Heart left ventricle (tissue), 16 donors: ENCODE measurements at regions of chr7 and their contacts with region 1.

Region 1: DNA sequence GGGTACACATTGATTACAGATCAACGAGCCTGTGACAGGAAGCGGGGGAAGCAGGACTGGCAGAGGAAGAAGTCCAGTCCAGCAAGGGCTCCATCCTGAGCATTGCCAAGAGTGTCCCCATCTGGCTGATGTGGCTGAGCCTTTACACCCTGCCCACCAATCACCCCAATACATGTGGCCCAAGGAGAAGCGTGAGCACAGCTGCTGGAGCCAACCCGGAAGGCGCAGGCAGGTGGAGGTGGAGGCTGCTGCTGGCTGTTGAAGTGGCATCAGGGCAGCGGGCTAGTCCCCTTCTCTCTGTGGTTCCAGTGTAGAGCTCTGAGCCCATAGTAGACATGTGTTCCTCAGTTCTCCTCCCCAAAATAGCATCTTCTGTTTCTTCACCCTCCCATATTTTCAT is 6.8 kb upstream of the AMPH start:
- DNase-seq: no peak
- ATAC-seq: no peak
- H3K4me3 ChIP-seq: no peak overlapping the region
- H3K27ac ChIP-seq: no peak overlapping the region
- H3K4me1 ChIP-seq: no peaks in the 10 kb centered on the region
- H3K27me3 ChIP-seq: peaks cover 0 to 5% (median 0%) of the 10 kb centered on the region in 9 donors
- CTCF ChIP-seq: no peak
- POLR2A ChIP-seq: no peak

Region 2: GRCh38 chr7:38262545-38262944 is 375.4 kb before region 1 on chr7:
- intact Hi-C with region 1: no loop called
- DNase-seq: no peak
- ATAC-seq: no peak
- H3K4me3 ChIP-seq: no peak overlapping the region
- H3K27ac ChIP-seq: no peak overlapping the region
- H3K4me1 ChIP-seq: no peaks in the 10 kb centered on the region
- H3K27me3 ChIP-seq: peaks cover 0 to 2% (median 0%) of the 10 kb centered on the region in 9 donors
- CTCF ChIP-seq: no peak
- POLR2A ChIP-seq: no peak

Region 3: DNA sequence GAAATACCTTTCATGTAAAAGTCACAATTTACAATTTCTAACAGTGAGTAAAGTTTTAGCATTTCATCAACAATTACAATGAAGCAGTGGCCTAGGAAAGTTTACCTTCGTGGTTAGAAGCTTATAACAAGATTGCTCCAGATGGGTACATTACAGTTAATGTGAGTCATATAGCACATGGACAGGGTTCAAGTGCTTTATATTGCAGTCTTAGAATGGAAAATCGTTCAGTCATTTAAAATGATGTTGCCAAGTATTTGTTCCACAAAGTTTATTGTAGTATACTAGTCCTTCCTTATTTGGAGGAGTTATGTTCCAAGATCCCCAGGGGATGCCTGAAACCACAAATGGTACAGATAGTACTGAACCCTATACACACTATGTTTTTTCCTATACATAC is 189.9 kb before region 1 on chr7:
- intact Hi-C with region 1: no loop called
- DNase-seq: no peak
- ATAC-seq: no peak
- H3K4me3 ChIP-seq: no peak overlapping the region
- H3K27ac ChIP-seq: no peak overlapping the region
- H3K4me1 ChIP-seq: peaks cover 0 to 13% (median 7%) of the 10 kb centered on the region in 12 donors
- H3K27me3 ChIP-seq: no peaks in the 10 kb centered on the region
- CTCF ChIP-seq: no peak
- POLR2A ChIP-seq: no peak

Region 4: DNA sequence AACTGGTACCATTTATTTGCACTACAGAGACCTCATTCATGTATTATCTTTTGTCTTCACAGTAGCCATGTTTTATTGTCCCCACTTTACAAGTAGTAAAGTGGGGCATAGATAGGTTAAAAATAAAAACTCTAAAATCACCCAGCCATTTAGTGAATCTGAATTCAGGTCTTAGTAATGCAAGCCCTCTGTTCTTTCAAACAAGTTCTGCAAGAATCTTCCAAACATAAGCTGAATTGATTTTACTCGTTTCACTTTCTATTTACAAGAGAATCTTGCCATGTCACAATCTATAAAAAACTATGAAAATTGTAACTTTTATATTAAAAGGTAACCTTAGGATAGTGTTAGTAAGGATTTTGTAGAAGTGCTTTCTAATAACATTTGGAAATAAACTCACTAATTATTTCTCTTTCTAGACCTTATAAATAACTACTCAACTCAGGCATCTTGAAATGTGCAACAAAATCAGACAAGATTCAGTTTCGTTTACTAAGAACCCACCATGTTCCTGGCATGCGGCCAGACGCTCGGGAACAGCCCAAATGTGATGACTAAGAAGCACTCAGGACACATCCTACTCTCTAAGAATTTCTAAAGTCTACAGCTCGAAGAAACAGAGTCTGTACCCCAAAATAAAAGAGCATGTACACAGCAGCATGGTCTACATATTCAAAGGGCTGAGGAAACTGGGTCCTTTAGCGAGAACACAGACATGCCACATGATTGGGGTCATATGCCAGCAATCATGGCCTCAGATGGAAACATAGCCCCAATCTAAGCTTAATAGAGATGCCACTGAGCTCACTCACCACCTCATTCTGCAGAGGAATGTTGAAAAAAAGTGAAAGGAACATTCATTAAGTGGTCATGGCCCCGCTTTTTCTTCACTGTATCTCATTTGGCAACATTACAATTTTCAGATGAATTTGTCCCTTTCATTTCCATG is 174.4 kb before region 1 on chr7:
- intact Hi-C with region 1: loop called in 1 of 10 experiments (anchors 5 kb)
- DNase-seq: peak in 4 of 5 donors; percentile 37 to 86 (median 52)
- ATAC-seq: peak in 1 of 4 donors; percentile 33
- H3K4me3 ChIP-seq: peak overlapping the region in 1 of 12 donors; percentile 31
- H3K27ac ChIP-seq: no peak overlapping the region
- H3K4me1 ChIP-seq: peaks cover 0 to 3% (median 0%) of the 10 kb centered on the region in 12 donors
- H3K27me3 ChIP-seq: no peaks in the 10 kb centered on the region
- CTCF ChIP-seq: no peak
- POLR2A ChIP-seq: no peak

Region 5: GRCh38 chr7:38561166-38561565 is 76.8 kb before region 1 on chr7:
- intact Hi-C with region 1: no loop called
- DNase-seq: no peak
- ATAC-seq: no peak
- H3K4me3 ChIP-seq: no peak overlapping the region
- H3K27ac ChIP-seq: no peak overlapping the region
- H3K4me1 ChIP-seq: no peaks in the 10 kb centered on the region
- H3K27me3 ChIP-seq: no peaks in the 10 kb centered on the region
- CTCF ChIP-seq: no peak
- POLR2A ChIP-seq: no peak

Region 6: DNA sequence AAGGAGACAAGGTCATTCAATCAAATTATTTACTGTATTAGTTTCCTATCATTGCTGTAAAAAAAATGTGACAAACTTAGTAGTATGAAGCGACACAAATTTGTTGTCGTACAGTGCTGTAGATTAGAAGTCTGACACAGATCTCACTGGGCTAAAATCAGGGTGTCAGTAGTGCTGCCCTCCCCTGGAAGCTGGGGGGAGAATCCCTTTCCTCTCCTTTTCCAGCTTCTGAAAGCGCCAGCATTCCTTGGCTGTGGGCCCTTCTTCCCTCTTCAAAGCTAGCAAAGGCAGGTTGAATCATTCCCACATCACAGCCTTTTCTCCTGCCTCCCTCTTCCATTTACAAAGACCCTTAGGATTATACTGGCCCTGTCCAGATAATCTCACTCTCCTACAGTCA is 243.1 kb after region 1 on chr7:
- intact Hi-C with region 1: no loop called
- DNase-seq: no peak
- ATAC-seq: no peak
- H3K4me3 ChIP-seq: no peak overlapping the region
- H3K27ac ChIP-seq: no peak overlapping the region
- H3K4me1 ChIP-seq: peaks cover 0 to 11% (median 0%) of the 10 kb centered on the region in 12 donors
- H3K27me3 ChIP-seq: no peaks in the 10 kb centered on the region
- CTCF ChIP-seq: no peak
- POLR2A ChIP-seq: no peak